ENCODE measurements at regions of chr16 and their contacts with region 1.

Region 1: DNA sequence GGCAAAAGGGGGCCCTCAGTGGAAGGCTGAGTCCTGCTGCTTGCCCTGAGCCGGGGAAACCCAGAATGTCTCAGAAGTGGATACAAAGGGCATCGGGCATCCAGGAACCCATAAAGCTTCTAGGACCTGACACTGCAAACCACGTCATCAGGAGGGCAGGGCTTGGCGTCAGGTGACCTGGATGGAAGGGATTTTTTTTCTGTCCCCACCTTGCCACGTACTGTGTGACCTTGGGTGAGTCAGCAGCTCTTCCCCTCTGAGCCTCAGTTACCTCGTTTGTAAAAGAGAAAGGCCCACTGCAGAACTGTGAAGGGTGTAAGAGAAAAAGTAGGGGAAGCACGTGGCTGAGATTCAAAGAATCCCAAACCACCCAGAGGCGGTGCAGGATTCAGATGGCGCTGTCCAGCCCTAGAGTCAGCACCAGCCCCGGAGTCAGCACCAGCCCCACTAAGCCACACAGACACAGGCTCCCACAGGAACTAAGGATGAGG is 53.7 kb downstream of the C16orf95 start:
- DNase-seq: no peak
- ATAC-seq: no peak

Region 2: DNA sequence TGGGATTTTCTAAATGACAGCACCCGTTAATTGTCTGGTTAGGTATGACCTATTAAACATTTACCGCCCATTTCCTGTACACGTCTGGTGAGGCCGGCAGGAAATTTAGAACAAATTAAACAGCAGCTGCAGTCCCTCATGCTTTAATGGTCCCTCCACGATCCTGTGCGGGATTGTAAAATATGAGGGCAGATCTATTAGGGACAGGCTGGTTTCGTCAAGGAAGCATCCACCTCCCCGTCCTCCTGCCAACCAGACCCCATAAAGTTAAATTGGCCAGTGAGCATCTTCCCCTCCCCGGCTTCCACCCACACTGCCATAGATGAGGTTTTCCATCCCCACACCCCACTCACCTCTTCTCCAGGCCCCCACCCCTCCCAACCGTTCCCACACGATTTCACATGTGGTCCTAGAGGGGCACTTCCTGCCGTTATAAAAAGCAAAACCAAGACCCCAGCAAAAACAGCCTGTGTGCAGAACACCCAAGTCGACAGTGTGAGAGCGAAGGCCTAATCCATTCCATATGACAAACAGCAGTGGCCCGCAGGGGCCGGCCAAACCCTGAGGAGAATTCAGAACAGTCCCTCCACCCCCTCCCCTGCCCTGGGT is 353.3 kb before region 1 on chr16:
- intact Hi-C with region 1: loop called (anchors 10 kb)
- DNase-seq: no peak
- ATAC-seq: no peak

Region 3: DNA sequence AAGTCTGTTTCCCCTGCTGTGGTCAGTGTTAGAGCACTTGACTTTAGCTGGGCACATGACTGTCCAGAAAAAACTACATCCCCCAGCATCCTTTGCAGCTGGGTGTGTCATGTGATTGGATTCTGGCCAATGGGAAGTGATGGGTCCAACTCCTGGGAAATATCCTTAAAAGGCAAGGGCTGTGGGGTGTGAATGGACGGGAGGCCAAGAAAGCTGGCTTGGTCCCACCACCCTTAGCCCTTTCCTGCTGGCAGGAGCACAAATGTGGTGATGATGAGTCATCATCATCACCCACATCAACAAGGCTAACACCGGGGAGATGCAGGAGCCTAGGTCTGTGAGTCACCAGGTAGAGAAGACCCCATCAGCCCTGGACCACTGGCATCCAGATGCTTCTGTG is 288.1 kb before region 1 on chr16:
- intact Hi-C with region 1: no loop called
- DNase-seq: no peak
- ATAC-seq: peak; percentile 56

Region 4: GRCh38 chr16:87461466-87461991 is 198.0 kb after region 1 on chr16:
- intact Hi-C with region 1: no loop called
- DNase-seq: peak; percentile 72
- ATAC-seq: peak; percentile 43